Body of pancreas (tissue), 4 donors: ENCODE measurements at regions of chr3 and their contacts with region 1.

Region 1: DNA sequence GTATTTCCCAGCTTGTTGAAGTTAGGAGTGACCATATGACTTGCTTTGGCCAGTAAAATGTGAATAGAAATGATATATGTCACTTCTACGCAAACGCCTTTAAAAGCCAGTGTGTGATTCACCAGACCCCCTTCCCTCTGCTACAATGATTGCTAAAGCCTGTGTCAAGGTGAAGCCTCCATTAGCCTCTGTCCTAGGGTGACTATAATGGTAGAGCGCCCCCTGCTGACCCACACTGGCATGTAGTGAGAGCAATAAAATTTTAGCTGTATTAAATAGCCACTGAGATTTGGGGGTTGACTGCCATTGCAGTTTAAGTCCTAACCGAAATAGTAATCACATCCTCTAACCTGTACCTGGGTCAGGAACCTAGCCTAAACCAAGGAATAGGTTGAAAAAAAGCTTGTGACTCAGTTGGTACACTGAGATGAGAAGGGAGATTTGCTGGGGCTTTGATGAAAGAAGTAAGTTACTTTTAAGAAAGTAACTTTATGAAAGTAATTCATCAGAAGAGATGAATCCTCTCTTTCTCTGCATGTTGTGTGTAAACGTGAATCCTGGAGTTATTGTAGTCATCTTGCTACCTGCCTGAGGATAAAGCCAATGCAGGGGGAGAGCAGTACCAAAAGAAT is 52.6 kb downstream of the GTF2E1 start:
- DNase-seq: peak; percentile 62 to 84 (median 79)
- ATAC-seq: peak; percentile 84
- H3K4me3 ChIP-seq: no peak overlapping the region
- H3K27ac ChIP-seq: no peak overlapping the region
- H3K4me1 ChIP-seq: no peaks in the 10 kb centered on the region
- H3K27me3 ChIP-seq: no peaks in the 10 kb centered on the region
- CTCF ChIP-seq: peak; percentile 49 to 76 (median 71)
- POLR2A ChIP-seq: no peak

Region 2: DNA sequence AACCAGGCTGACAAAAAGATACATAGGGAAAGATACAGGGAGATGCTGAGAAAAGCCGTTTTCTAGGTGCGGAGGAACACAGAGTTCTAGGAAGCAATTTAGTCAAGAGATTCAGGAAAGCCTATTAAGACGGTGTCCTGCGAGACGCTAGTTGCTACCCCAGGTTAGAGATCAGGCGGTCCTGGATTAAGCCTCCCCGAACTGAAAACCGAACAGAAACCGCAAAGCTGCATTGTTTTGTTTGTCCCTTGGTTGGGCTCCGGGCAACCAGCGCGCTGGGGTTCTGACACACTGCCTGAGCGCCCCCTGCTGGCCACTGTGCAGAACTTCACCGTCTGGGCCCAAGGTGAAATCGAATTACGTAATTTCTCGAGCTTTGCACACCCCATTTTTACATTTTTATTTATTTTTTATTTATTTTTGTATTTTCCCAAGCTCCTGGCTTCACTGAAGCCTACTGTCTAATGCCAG is 236.3 kb before region 1 on chr3:
- intact Hi-C with region 1: loop called (anchors 10 kb)
- DNase-seq: peak; percentile 92 to 93 (median 92)
- ATAC-seq: peak; percentile 82
- H3K4me3 ChIP-seq: peak overlapping the region in 1 of 2 donors; percentile 4
- H3K27ac ChIP-seq: peak overlapping the region in 3 of 4 donors; percentile 55 to 69 (median 60)
- H3K4me1 ChIP-seq: peaks cover 48% of the 10 kb centered on the region
- H3K27me3 ChIP-seq: no peaks in the 10 kb centered on the region
- CTCF ChIP-seq: peak; percentile 98 to 100 (median 99)
- POLR2A ChIP-seq: peak in 2 of 3 donors; percentile 12 to 59

Region 3: GRCh38 chr3:121467085-121467484 is 672.0 kb after region 1 on chr3:
- intact Hi-C with region 1: no loop called
- DNase-seq: no peak
- ATAC-seq: no peak
- H3K4me3 ChIP-seq: no peak overlapping the region
- H3K27ac ChIP-seq: no peak overlapping the region
- H3K4me1 ChIP-seq: no peaks in the 10 kb centered on the region
- H3K27me3 ChIP-seq: no peaks in the 10 kb centered on the region
- CTCF ChIP-seq: no peak
- POLR2A ChIP-seq: no peak